ENCODE measurements at regions of chr3 and their contacts with region 1.

Region 1: DNA sequence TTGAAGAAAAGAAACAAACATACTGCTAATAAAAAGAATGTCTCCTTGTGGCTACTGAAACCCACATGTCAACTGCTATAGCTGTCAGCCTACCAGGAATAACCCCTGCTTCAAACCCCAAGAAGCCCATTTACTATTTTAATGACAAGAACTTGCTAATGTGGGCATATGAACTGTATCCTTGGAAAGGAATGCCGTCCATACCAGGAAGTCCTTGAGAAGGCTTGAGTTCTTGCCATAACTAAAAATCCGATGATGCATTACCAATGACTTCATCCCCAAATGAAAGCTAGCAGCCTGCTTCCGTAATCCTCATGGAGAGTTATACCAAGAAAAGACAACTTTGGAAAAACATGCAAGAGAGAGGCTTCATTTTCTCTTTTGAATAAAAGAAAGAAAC is 34.8 kb downstream of the MINDY4B start:
- DNase-seq: no peak
- H3K4me3 ChIP-seq: no peak overlapping the region
- H3K27ac ChIP-seq: no peak overlapping the region
- H3K4me1 ChIP-seq: no peaks in the 10 kb centered on the region
- H3K27me3 ChIP-seq: peaks cover 2 to 6% of the 10 kb centered on the region in 2 experiments
- CTCF ChIP-seq: no peak
- POLR2A ChIP-seq: no peak

Region 2: DNA sequence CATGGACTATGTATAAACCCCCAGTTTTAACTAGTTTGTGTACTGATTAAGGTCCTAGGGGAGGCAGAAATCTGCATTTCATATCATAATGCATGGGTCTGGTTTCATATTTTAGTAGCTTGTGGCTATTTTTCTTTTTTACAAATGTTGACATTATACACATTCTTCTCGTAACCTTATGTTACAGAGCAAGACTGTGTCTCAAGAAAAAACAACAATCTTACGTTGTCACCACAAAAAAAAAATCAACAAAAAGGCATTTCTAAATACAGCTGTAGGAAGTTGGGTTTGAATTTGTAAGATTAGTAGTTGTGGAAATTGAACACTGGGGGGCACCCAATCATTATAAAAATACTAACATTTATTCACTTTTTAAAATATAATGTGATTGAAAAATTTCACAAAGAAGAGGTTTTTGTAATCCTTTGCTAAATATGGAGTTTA is 342.0 kb before region 1 on chr3:
- CTCF ChIA-PET with region 1: interaction called, 4 read pairs
- POLR2A ChIA-PET with region 1: no interaction called
- dilution Hi-C with region 1: no loop called
- intact Hi-C with region 1: loop called (anchors 1 kb)
- DNase-seq: peak; percentile 49
- H3K4me3 ChIP-seq: no peak overlapping the region
- H3K27ac ChIP-seq: no peak overlapping the region
- H3K4me1 ChIP-seq: no peaks in the 10 kb centered on the region
- H3K27me3 ChIP-seq: peaks cover 0 to 2% of the 10 kb centered on the region in 2 experiments
- CTCF ChIP-seq: peak in 1 of 2 donors; percentile 8
- POLR2A ChIP-seq: no peak

Region 3: GRCh38 chr3:150589759-150590158 is 280.6 kb before region 1 on chr3:
- CTCF ChIA-PET with region 1: interaction called, 4 read pairs
- POLR2A ChIA-PET with region 1: no interaction called
- dilution Hi-C with region 1: no loop called
- intact Hi-C with region 1: loop called (anchors 2 kb)
- DNase-seq: no peak
- H3K4me3 ChIP-seq: no peak overlapping the region
- H3K27ac ChIP-seq: no peak overlapping the region
- H3K4me1 ChIP-seq: no peaks in the 10 kb centered on the region
- H3K27me3 ChIP-seq: no peaks in the 10 kb centered on the region
- CTCF ChIP-seq: no peak
- POLR2A ChIP-seq: no peak

Region 4: DNA sequence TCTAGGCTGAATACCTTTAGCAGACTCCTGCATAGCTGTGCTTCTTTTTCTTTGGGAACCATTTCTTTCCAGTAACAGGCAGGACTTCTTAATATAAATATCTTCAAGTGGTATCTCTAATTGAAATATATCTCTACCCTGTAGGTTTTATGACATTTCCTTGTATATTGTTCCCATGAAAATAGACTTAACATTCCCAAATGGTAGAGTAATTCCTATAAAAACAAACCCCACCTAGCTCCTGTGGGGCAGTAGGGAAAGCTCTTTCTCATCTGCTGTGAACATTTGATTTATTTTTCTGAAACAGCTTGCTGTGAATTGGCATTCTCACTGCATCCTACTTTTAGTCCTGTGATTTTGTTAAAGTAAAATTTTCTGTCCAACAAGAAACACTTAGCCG is 246.5 kb before region 1 on chr3:
- CTCF ChIA-PET with region 1: no interaction called
- POLR2A ChIA-PET with region 1: no interaction called
- dilution Hi-C with region 1: no loop called
- intact Hi-C with region 1: no loop called
- DNase-seq: no peak
- H3K4me3 ChIP-seq: no peak overlapping the region
- H3K27ac ChIP-seq: no peak overlapping the region
- H3K4me1 ChIP-seq: no peaks in the 10 kb centered on the region
- H3K27me3 ChIP-seq: no peaks in the 10 kb centered on the region
- CTCF ChIP-seq: no peak
- POLR2A ChIP-seq: no peak

Region 5: DNA sequence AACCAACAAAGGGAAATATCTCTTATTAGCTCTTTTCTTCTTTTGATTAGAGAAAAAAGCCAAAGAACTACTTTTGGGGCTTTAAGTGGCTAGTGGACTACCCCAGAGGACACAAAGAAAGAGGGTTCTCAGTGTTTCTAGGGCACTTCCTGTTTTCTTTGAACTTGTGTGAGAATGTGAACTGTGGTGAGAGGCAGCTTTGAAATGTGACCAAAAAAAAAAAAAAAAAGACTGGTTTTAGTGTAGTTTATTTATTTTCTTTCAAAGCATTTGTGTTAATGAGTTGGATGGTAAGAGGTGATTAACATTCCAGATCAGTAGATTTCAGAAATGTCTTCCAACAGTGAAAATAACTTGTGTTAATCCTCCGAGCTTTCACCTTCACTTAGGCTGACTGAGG is 234.9 kb before region 1 on chr3:
- CTCF ChIA-PET with region 1: no interaction called
- POLR2A ChIA-PET with region 1: no interaction called
- dilution Hi-C with region 1: no loop called
- intact Hi-C with region 1: no loop called
- DNase-seq: peak; percentile 46
- H3K4me3 ChIP-seq: no peak overlapping the region
- H3K27ac ChIP-seq: no peak overlapping the region
- H3K4me1 ChIP-seq: no peaks in the 10 kb centered on the region
- H3K27me3 ChIP-seq: no peaks in the 10 kb centered on the region
- CTCF ChIP-seq: no peak
- POLR2A ChIP-seq: no peak

Region 6: GRCh38 chr3:150787741-150788370 is 82.5 kb before region 1 on chr3:
- CTCF ChIA-PET with region 1: interaction called, 52 read pairs
- POLR2A ChIA-PET with region 1: no interaction called
- dilution Hi-C with region 1: no loop called
- intact Hi-C with region 1: loop called (anchors 1 kb)
- DNase-seq: peak; percentile 60
- H3K4me3 ChIP-seq: no peak overlapping the region
- H3K27ac ChIP-seq: no peak overlapping the region
- H3K4me1 ChIP-seq: peaks cover 5% of the 10 kb centered on the region
- H3K27me3 ChIP-seq: peaks cover 16 to 24% of the 10 kb centered on the region in 2 experiments
- CTCF ChIP-seq: peak; percentile 86 to 93
- POLR2A ChIP-seq: no peak

Region 7: GRCh38 chr3:151697496-151697895 is 827.1 kb after region 1 on chr3:
- CTCF ChIA-PET with region 1: no interaction called
- POLR2A ChIA-PET with region 1: no interaction called
- dilution Hi-C with region 1: no loop called
- intact Hi-C with region 1: no loop called
- DNase-seq: no peak
- H3K4me3 ChIP-seq: no peak overlapping the region
- H3K27ac ChIP-seq: no peak overlapping the region
- H3K4me1 ChIP-seq: no peaks in the 10 kb centered on the region
- H3K27me3 ChIP-seq: no peaks in the 10 kb centered on the region
- CTCF ChIP-seq: no peak
- POLR2A ChIP-seq: no peak